Sciatic nerve (tissue), 2 donors: ENCODE measurements at regions of chr10 and their contacts with region 1.

Region 1: DNA sequence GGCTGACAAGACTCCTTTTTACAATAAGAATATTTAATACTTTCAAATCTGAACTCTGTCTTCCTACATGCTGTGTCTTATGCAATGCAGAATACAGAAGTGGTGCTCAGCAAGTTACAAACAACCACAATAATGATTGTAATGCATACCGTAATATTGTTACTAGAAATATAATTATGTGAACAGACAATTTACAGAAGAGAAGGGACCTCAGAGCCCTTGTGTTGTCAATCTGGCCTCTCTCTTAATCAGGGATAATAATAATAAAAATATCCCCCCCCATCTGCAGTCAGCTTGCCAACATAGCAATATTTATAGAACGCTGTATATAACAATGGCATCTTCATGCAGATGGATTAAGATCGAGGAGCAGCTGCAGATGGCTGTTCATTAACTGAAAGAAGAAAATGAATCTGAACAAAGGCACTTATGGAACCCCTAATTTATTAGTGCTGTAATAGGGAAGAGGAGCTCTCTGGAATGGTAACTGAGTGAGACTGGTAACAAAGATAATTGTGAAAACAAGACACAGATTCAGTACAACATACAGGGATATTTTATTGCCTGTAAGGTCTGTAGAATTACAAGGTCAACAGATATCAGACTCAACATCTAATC is 106.3 kb downstream of the TMEM26 start:
- DNase-seq: no peak
- ATAC-seq: no peak

Region 2: DNA sequence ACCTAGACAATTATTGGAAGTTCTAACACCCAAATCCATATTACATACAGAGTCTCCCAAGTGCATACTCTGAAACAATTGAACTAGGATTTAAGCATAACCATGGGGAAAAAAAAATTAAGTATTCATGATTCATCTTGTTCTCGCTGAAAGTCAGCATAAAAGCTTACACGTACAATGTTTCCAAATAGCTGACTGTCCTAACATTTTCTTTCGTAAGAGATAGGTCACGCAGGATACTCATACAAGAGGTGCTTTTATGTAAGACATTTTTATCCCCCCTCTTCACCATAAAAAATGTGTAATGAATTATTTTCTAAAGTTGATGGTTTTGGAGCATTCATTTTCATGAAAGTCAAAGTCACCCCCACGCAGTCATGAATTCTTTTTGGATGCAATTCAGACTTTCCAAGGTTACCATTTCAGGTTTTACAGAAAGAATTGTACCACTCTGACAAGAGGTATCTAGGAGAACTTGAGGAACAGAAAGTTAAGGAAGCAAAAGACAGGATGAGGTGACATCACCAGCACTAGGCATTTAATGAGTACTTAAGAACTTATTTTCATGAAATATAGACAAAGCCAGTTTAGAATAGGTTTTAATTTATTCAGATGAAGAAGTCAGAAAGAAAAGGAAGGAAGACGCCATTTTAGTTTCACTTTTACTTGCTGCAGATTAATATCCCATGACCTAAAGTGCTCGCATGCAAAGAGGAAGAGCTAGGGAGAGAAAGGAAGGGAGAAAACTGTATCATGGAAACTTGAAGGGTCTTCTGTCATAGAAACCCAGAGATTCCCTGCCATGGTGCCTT is 50.5 kb after region 1 on chr10:
- intact Hi-C with region 1: loop called (anchors 2 kb)
- DNase-seq: no peak
- ATAC-seq: peak; percentile 73

Region 3: GRCh38 chr10:61554925-61555324 is 208.0 kb after region 1 on chr10:
- intact Hi-C with region 1: no loop called
- DNase-seq: no peak
- ATAC-seq: no peak

Region 4: DNA sequence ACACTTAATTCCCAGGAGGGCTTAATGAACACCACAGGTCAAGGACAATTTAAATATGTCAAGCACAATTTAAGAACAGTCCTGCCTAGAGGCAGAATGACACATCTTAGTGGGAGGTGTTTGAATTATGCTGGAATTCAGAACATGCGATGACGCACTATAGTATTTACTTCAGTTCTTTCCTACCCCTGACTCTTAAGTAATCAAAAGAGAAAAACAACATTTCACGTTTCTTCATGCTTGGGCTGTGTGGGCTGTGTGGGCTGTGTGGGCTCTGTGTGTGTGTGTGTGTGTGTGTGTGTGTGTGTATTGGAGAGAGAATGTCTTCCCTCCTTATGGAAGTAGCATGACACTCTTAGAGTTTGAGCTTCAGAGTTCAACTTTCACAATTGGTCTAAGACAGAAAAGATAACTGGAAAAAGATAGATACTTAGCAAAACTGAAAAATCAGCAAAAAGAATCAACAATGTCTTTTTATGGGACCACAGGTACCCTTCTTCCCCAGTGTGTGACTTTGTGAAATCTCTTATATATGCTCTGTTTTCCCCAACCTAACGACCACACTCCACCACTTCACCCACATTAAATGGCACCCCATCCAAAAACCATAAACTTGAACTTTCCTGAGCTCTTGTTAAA is 282.1 kb after region 1 on chr10:
- intact Hi-C with region 1: no loop called
- DNase-seq: no peak
- ATAC-seq: no peak